Esophagus muscularis mucosa (tissue), 4 donors: ENCODE measurements at regions of chr15 and their contacts with region 1.

Region 1: GRCh38 chr15:90529371-90530249 is at the start of gene CRTC3:
- DNase-seq: no peak
- H3K4me3 ChIP-seq: peak within 1 kb of the TSS; percentile 84 to 93 (median 90)
- H3K27ac ChIP-seq: peak within 1 kb of the TSS; percentile 92 to 95 (median 94)
- H3K4me1 ChIP-seq: peaks cover 37 to 50% (median 46%) of the 10 kb centered on the region in 4 donors
- H3K27me3 ChIP-seq: no peaks in the 10 kb centered on the region
- CTCF ChIP-seq: no peak
- EP300 ChIP-seq: no peak
- POLR2A ChIP-seq: no peak
- total RNA-seq, gene CRTC3: 46.4 to 66.8 (median 59.8) TPM

Region 2: DNA sequence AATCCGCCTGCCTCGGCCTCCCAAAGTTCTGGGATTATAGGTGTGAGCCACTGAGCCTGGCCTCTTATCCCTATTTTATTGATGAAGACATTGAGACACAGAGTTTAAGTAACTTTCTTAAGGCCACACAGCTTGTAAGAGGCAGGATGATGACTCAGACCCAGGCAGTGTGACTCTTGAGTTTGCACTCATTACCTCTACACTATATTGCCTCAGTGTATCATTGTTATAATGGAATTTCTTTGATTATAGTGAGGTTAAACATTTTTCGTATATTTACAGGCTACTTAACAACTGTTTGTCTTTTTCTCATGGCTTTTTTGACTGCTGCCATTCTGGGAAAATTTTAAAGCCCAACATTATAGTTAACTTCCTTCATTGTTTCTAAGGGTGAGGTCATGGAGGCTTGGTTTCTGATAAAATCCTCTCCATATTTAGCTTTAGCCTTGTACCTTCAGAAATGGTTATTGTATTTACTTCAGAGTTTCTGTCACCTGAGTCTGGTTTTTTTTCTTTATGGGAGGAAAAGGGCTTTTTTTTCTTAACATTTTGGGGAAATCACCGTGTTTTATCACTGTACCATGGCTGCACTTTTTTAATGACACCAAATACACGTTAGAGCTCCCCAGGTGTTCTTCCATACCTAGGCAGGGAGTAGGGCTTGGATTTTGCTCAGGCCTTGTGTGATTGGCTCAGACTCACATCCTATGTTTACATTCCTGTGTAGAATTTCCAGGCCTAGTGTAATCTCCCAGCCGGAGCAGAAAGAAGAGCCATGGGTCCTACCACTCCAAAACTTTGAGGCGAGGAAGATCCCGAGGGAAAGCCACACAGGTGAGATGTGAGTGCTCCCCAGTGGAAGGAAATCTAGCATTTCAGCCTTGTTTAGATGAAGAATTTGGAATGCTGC is 171.2 kb before region 1 on chr15:
- intact Hi-C with region 1: no loop called
- DNase-seq: no peak
- H3K4me3 ChIP-seq: no peak overlapping the region
- H3K27ac ChIP-seq: no peak overlapping the region
- H3K4me1 ChIP-seq: peaks cover 16 to 21% (median 20%) of the 10 kb centered on the region in 4 donors
- H3K27me3 ChIP-seq: no peaks in the 10 kb centered on the region
- CTCF ChIP-seq: no peak
- EP300 ChIP-seq: no peak
- POLR2A ChIP-seq: no peak

Region 3: DNA sequence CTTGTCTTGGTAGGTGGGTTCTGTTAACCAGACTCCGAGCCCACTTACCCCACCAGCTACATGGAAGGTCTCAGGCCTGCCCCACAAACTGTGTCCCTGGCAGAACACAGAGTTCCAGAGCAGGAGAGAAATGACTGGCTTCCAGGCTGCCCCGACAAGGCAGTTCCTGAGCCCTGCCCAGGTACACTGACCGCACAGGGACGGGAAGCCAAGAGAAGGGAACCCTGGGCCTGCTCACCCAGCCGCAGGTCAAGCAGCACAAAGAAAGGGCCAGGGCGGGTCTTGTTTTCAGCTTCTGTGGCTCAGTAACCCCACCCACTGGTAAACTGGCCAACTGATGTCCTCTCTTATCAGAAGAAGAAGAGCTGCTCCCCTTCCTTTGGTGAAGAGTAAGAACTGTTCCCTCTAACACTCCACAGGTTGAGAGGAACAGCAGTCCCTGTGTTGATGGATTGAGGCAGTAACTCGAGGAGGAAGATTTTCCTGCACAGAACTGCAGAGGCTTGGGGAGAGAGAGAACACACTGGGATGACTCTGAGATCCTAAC is 68.5 kb after region 1 on chr15:
- intact Hi-C with region 1: loop called (anchors 5 kb)
- DNase-seq: no peak
- H3K4me3 ChIP-seq: no peak overlapping the region
- H3K27ac ChIP-seq: peak overlapping the region; percentile 63 to 65 (median 64)
- H3K4me1 ChIP-seq: peaks cover 50 to 64% (median 61%) of the 10 kb centered on the region in 4 donors
- H3K27me3 ChIP-seq: no peaks in the 10 kb centered on the region
- CTCF ChIP-seq: peak in 1 of 3 experiments; percentile 14
- EP300 ChIP-seq: no peak
- POLR2A ChIP-seq: no peak

Region 4: GRCh38 chr15:90665288-90666134 is 135.9 kb after region 1 on chr15:
- intact Hi-C with region 1: no loop called
- DNase-seq: no peak
- H3K4me3 ChIP-seq: peak overlapping the region; percentile 77 to 96 (median 84)
- H3K27ac ChIP-seq: peak overlapping the region; percentile 83 to 89 (median 87)
- H3K4me1 ChIP-seq: peaks cover 9 to 28% (median 24%) of the 10 kb centered on the region in 4 donors
- H3K27me3 ChIP-seq: no peaks in the 10 kb centered on the region
- CTCF ChIP-seq: no peak
- EP300 ChIP-seq: no peak
- POLR2A ChIP-seq: no peak